Panc1 (cell line): ENCODE measurements at regions of chr3 and their contacts with region 1.

Region 1: GRCh38 chr3:158109804-158110657 is at the start of gene RSRC1:
- DNase-seq: peak; percentile 84
- ATAC-seq: peak; percentile 89
- H3K4me3 ChIP-seq: peak within 1 kb of the TSS; percentile 77 to 92
- H3K27ac ChIP-seq: peak within 1 kb of the TSS; percentile 96
- H3K4me1 ChIP-seq: peaks cover 23% of the 10 kb centered on the region
- H3K27me3 ChIP-seq: no peaks in the 10 kb centered on the region
- CTCF ChIP-seq: no peak
- total RNA-seq, gene RSRC1: 49.4 TPM

Region 2: DNA sequence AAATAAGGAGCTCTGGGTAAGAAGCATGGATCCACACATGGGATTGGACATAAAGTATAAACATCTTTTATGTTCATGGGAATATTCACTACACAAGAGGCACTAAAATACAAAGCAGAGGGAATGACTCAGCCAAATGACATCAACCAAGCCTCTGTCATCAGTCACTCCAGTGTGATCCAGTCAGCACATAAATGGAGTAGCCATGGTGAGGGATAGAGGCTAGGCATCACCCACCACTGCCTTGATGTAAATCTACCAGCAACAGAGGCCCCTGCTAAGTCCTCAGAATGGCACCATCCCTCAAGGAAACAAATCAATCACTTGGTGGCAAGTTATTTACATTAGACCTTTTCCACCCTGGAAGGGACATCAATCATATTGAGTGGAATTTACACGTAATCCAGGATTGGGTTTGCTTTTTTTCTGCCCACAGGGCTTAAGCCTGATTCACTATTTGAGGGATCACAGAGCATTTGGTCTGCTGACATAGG is 634.1 kb before region 1 on chr3:
- CTCF ChIA-PET with region 1: no interaction called
- POLR2A ChIA-PET with region 1: no interaction called
- in situ Hi-C with region 1: no loop called
- intact Hi-C with region 1: no loop called
- DNase-seq: no peak
- ATAC-seq: no peak
- H3K4me3 ChIP-seq: no peak overlapping the region
- H3K27ac ChIP-seq: no peak overlapping the region
- H3K4me1 ChIP-seq: no peaks in the 10 kb centered on the region
- H3K27me3 ChIP-seq: no peaks in the 10 kb centered on the region
- CTCF ChIP-seq: no peak

Region 3: DNA sequence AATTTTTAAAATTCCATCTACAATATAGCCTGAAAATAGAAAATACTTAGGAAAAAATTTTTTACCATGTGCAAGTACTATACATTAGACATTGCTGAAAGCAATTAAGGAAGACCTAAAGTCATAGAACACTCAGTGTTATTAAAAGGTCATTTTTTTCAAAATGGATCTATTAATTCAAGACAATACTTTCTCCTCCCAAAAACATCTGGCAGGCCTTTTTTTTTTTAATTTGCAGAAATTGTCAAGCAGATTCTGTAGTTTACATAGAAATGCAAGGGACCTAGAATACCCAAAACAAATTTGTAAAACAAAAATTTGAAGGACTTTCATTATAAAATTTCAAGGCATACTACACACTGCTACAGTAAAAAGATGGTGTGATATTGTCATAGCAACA is 368.4 kb before region 1 on chr3:
- CTCF ChIA-PET with region 1: no interaction called
- POLR2A ChIA-PET with region 1: interaction called, 11 read pairs
- in situ Hi-C with region 1: no loop called
- intact Hi-C with region 1: no loop called
- DNase-seq: no peak
- ATAC-seq: no peak
- H3K4me3 ChIP-seq: no peak overlapping the region
- H3K27ac ChIP-seq: no peak overlapping the region
- H3K4me1 ChIP-seq: no peaks in the 10 kb centered on the region
- H3K27me3 ChIP-seq: no peaks in the 10 kb centered on the region
- CTCF ChIP-seq: no peak

Region 4: GRCh38 chr3:158085358-158085757 is 24.7 kb before region 1 on chr3:
- CTCF ChIA-PET with region 1: no interaction called
- POLR2A ChIA-PET with region 1: no interaction called
- in situ Hi-C with region 1: no loop called
- intact Hi-C with region 1: no loop called
- DNase-seq: no peak
- ATAC-seq: no peak
- H3K4me3 ChIP-seq: no peak overlapping the region
- H3K27ac ChIP-seq: no peak overlapping the region
- H3K4me1 ChIP-seq: no peaks in the 10 kb centered on the region
- H3K27me3 ChIP-seq: peaks cover 16% of the 10 kb centered on the region
- CTCF ChIP-seq: no peak

Region 5: GRCh38 chr3:158127250-158128219 is 17.5 kb after region 1 on chr3:
- CTCF ChIA-PET with region 1: no interaction called
- POLR2A ChIA-PET with region 1: interaction called, 14 read pairs
- in situ Hi-C with region 1: no loop called
- intact Hi-C with region 1: no loop called
- DNase-seq: no peak
- ATAC-seq: no peak
- H3K4me3 ChIP-seq: no peak overlapping the region
- H3K27ac ChIP-seq: no peak overlapping the region
- H3K4me1 ChIP-seq: no peaks in the 10 kb centered on the region
- H3K27me3 ChIP-seq: no peaks in the 10 kb centered on the region
- CTCF ChIP-seq: no peak

Region 6: DNA sequence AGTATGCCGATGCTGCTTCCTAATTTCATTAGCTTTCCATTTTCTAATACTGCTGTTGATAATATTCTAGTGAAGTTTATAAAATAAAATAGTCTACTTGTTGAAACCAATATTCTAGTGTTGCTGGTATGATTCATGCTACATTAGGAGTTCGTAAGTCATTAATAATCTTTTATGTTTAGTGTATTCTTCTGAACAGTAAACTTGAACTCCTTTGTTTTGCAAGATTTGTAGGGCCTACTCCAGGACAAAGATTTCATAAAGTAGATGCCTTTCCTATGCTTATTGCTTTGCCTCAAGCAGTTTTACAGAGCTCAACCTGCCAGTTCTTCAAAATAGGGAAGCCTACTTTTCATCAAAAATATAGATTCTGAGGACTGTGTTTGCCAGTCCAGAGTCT is 111.4 kb after region 1 on chr3:
- CTCF ChIA-PET with region 1: no interaction called
- POLR2A ChIA-PET with region 1: interaction called, 13 read pairs
- in situ Hi-C with region 1: no loop called
- intact Hi-C with region 1: no loop called
- DNase-seq: no peak
- ATAC-seq: no peak
- H3K4me3 ChIP-seq: no peak overlapping the region
- H3K27ac ChIP-seq: no peak overlapping the region
- H3K4me1 ChIP-seq: no peaks in the 10 kb centered on the region
- H3K27me3 ChIP-seq: no peaks in the 10 kb centered on the region
- CTCF ChIP-seq: no peak

Region 7: DNA sequence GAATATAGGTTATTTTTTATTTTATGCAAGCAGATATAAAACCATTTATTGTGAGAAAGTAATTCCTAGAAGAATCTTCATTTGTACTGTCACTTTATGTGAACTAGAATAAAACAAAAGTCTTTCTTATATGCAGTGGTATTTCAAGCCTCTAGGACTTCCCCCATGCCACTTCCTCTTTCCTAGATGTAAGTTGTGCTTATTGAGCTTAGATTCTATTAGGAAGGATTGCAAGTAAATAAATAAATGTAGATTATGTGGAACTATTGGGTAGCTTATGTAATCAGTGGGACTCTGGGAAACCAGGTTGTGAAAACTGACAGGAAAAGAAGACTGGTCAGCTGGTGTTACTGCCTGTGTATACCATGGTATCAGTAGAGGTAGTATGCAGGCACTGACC is 169.6 kb after region 1 on chr3:
- CTCF ChIA-PET with region 1: no interaction called
- POLR2A ChIA-PET with region 1: no interaction called
- in situ Hi-C with region 1: no loop called
- intact Hi-C with region 1: no loop called
- DNase-seq: no peak
- ATAC-seq: no peak
- H3K4me3 ChIP-seq: no peak overlapping the region
- H3K27ac ChIP-seq: no peak overlapping the region
- H3K4me1 ChIP-seq: no peaks in the 10 kb centered on the region
- H3K27me3 ChIP-seq: no peaks in the 10 kb centered on the region
- CTCF ChIP-seq: no peak

Region 8: GRCh38 chr3:158369279-158369678 is 259.2 kb after region 1 on chr3:
- CTCF ChIA-PET with region 1: no interaction called
- POLR2A ChIA-PET with region 1: interaction called, 13 read pairs
- in situ Hi-C with region 1: no loop called
- intact Hi-C with region 1: no loop called
- DNase-seq: no peak
- ATAC-seq: no peak
- H3K4me3 ChIP-seq: no peak overlapping the region
- H3K27ac ChIP-seq: no peak overlapping the region
- H3K4me1 ChIP-seq: no peaks in the 10 kb centered on the region
- H3K27me3 ChIP-seq: no peaks in the 10 kb centered on the region
- CTCF ChIP-seq: no peak

Region 9: GRCh38 chr3:158407844-158408517 is 297.9 kb after region 1 on chr3:
- CTCF ChIA-PET with region 1: no interaction called
- POLR2A ChIA-PET with region 1: no interaction called
- in situ Hi-C with region 1: no loop called
- intact Hi-C with region 1: no loop called
- DNase-seq: no peak
- ATAC-seq: no peak
- H3K4me3 ChIP-seq: no peak overlapping the region
- H3K27ac ChIP-seq: no peak overlapping the region
- H3K4me1 ChIP-seq: no peaks in the 10 kb centered on the region
- H3K27me3 ChIP-seq: no peaks in the 10 kb centered on the region
- CTCF ChIP-seq: no peak